Activated CD4-positive, alpha-beta memory T cell treated with anti-CD3 and anti-CD28 coated beads for 36 hours (primary cell): ENCODE measurements at regions of chr4 and their contacts with region 1.

Region 1: DNA sequence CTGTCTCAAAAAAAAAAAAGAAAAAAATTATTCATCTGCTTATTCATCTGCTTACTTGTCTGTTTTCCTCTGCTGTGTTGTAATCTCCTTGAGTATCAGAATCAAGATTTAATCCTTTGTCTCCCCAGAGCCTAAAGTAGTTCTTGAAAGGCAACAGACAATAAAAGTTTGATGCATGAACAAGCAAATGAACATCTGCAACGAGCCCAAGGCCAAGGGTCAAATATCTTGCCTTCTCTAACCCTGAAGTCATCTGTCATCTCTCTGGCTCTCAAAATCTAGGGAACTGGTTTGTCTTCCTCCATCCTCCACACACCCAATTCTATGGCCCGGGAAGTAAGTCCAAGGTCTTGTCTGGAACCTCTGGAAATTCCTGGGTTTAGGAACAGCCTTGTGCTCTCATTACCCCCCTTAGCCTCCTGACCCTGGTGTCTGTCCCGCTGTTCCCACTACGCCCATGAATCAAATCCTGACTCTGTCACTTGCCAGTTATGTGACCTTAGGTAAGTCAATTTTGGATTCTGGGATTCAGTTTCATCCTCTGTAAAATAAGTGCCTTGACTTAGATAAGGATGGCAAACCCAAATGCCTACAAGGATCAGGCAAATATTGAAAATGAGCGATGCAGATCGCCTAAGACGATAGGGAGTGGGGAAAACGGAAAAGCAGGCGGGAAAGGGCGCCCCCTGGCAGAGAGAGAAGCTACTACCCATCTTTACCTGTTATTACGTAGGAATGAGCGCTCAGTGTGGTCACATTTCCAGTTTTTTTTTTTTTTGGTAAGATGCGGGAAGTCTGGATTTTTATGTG is 102.7 kb upstream of the DHX15 start:
- DNase-seq: peak; percentile 47
- H3K4me3 Mint-ChIP-seq: no peak overlapping the region
- H3K27ac Mint-ChIP-seq: no peak overlapping the region
- H3K4me1 Mint-ChIP-seq: no peaks in the 10 kb centered on the region
- H3K27me3 Mint-ChIP-seq: peaks cover 4% of the 10 kb centered on the region

Region 2: DNA sequence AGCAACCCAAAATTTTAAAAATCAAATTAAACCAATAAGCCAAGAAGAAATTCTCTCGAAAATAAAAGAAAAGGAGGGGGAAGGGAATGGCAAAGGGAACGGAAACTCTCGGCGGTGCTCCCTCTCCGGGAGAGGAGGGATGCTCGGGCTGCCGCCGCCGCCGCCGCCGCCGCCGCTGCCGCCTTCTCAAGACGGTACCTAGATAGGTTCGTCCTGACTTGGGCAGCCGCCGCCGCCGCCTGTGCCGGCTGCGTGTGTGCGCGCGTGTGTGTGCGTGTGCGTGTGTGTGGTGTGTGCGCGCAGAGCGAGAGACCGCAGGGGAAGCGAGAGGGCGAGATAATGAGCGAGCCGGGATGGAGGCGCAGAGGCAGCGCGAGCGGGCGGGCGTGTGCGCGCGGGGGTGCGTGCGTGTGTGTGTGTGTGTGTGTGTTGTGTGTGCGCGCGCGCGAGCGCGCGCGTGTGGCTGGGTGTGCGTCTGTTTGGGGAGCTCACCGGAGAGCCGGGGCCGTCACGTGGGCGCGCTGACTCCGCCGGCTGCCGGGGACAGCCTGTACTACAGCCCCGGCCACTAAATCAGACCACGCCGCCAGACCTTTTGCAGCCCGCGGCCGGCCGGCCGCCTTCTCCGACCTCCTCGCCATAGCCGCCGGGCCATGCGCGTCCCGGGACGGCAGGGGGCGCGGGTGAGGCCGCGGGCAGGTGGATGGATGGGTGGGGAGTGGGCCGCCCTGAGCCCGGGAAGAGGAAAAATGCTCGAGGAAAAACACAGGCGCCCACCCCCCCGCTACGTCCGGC is 214.4 kb before region 1 on chr4:
- CTCF ChIA-PET with region 1: interaction called, 4 read pairs
- POLR2A ChIA-PET with region 1: no interaction called
- intact Hi-C with region 1: loop called (anchors 5 kb)
- DNase-seq: peak; percentile 73
- H3K4me3 Mint-ChIP-seq: peak overlapping the region; percentile 79
- H3K27ac Mint-ChIP-seq: no peak overlapping the region
- H3K4me1 Mint-ChIP-seq: peaks cover 25% of the 10 kb centered on the region
- H3K27me3 Mint-ChIP-seq: peaks cover 47% of the 10 kb centered on the region

Region 3: DNA sequence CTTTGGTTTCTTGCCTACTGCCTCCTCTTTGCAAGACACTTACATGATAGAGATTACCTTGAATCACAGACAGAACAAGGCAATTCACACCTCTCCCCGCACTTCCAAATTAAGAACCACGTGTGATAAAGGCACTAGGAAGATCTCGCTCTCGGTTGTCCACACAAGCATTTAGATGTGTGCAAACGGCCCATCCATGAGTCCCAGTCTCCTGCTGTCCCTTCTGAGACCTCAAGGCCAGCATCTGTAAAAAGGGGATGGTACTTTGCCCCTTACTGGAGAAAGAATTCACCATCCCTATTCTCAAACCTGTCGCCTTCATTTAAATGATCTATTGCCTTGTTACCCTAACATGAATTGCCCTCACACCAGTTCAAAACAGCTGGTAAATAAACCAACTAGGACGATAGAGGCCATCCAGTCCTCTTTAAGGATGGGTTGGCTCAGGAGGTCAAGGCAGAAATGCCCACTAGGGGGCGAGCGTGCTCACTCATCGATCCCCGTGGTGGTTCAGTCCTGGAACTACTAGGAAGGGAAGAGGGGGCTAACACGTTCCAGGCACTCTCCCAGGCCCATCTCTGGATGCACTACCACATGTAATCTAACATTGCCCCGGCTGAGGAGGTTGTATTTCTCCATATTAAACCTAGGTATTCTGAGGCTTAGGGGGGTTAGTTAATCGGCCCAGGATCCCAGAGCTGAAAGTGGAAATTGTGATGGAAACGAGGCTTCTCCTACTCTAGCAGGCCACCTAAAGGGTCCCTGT is 198.5 kb before region 1 on chr4:
- CTCF ChIA-PET with region 1: interaction called, 12 read pairs
- POLR2A ChIA-PET with region 1: no interaction called
- intact Hi-C with region 1: loop called (anchors 1 kb)
- DNase-seq: peak; percentile 77
- H3K4me3 Mint-ChIP-seq: no peak overlapping the region
- H3K27ac Mint-ChIP-seq: no peak overlapping the region
- H3K4me1 Mint-ChIP-seq: peaks cover 3% of the 10 kb centered on the region
- H3K27me3 Mint-ChIP-seq: peaks cover 17% of the 10 kb centered on the region